ENCODE measurements at regions of chrX and their contacts with region 1.

Region 1: DNA sequence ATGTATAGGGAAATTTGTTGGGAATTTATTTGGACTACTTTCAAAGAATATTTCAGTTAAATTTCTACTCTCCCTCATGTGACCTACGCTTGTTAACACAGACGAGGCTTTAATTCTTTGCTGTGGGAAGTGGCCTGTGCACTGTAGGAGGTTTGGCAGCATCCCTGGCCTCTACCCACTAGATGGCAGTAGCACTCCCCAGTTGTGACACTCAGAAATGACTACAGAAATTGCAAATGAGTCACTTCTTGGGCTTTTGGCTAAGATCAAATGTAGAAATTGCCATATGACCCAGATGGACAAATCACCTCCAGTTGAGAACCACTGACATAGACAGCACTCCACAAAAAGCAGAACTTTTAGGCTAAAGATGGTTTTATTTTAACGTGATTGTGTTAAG is 22.1 kb downstream of the PIR start:
- DNase-seq: peak; percentile 65
- ATAC-seq: peak; percentile 83
- H3K4me3 ChIP-seq: no peak overlapping the region
- H3K27ac ChIP-seq: no peak overlapping the region
- H3K4me1 ChIP-seq: peaks cover 2% of the 10 kb centered on the region
- H3K27me3 ChIP-seq: peaks cover 2% of the 10 kb centered on the region
- CTCF ChIP-seq: peak; percentile 81
- POLR2A ChIP-seq: no peak
- RAD21 ChIP-seq: peak; percentile 73

Region 2: GRCh38 chrX:15299941-15300851 is 170.8 kb before region 1 on chrX:
- CTCF ChIA-PET with region 1: no interaction called
- POLR2A ChIA-PET with region 1: no interaction called
- dilution Hi-C with region 1: no loop called
- in situ Hi-C with region 1: no loop called
- intact Hi-C with region 1: loop called (anchors 2 kb)
- DNase-seq: peak; percentile 30
- ATAC-seq: peak; percentile 29; the same call in 1 of the 2 replicates
- H3K4me3 ChIP-seq: no peak overlapping the region
- H3K27ac ChIP-seq: no peak overlapping the region
- H3K4me1 ChIP-seq: no peaks in the 10 kb centered on the region
- H3K27me3 ChIP-seq: peaks cover 1% of the 10 kb centered on the region
- CTCF ChIP-seq: peak; percentile 54
- POLR2A ChIP-seq: no peak
- RAD21 ChIP-seq: peak; percentile 44

Region 3: GRCh38 chrX:15349046-15349445 is 122.0 kb before region 1 on chrX:
- CTCF ChIA-PET with region 1: interaction called, 17 read pairs
- POLR2A ChIA-PET with region 1: no interaction called
- dilution Hi-C with region 1: no loop called
- in situ Hi-C with region 1: loop called (anchors 5 kb)
- intact Hi-C with region 1: loop called (anchors 1 kb)
- DNase-seq: peak; percentile 73
- ATAC-seq: peak; percentile 90
- H3K4me3 ChIP-seq: no peak overlapping the region
- H3K27ac ChIP-seq: no peak overlapping the region
- H3K4me1 ChIP-seq: no peaks in the 10 kb centered on the region
- H3K27me3 ChIP-seq: peaks cover 4% of the 10 kb centered on the region; the same call in 1 of the 2 replicates
- CTCF ChIP-seq: peak; percentile 66
- POLR2A ChIP-seq: no peak
- RAD21 ChIP-seq: peak; percentile 77

Region 4: DNA sequence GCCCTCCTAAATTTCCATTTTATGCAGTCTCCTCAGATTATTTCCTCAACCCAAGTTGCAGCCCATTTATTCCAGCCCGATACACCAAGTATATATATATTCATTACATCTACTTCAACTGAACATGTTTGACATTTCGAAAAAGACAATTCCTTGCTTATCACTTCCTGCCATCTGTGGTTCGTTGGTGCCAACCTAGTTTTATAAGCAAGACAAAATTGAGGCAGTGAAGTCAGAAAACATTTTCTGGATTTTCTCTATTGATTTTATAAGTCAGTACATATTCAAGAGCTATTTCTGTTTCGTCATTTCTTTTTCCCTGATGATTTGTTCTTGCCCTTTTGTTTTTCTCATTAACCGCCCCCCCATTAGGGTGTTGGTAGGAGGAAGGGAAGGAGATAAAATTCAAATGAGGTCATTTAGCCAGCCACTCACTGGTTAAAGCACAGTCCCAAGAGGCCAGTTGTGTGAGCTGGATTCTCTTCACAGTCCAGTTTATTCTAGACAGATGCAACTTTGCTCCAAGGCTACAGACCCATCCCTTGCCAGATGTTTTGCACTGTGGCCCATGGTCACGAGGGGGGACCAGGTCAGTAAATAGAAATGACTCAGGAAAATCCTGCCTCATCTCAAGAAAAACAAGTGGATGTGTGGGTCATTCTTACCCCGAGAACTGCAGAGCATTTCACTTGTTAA is 66.5 kb before region 1 on chrX:
- CTCF ChIA-PET with region 1: no interaction called
- POLR2A ChIA-PET with region 1: no interaction called
- dilution Hi-C with region 1: no loop called
- in situ Hi-C with region 1: no loop called
- intact Hi-C with region 1: loop called (anchors 5 kb)
- DNase-seq: peak; percentile 36
- ATAC-seq: peak; percentile 62; the same call in 1 of the 2 replicates
- H3K4me3 ChIP-seq: no peak overlapping the region
- H3K27ac ChIP-seq: no peak overlapping the region
- H3K4me1 ChIP-seq: peaks cover 2% of the 10 kb centered on the region; the same call in 1 of the 2 replicates
- H3K27me3 ChIP-seq: no peaks in the 10 kb centered on the region; the same call in 1 of the 2 replicates
- CTCF ChIP-seq: no peak
- POLR2A ChIP-seq: no peak
- RAD21 ChIP-seq: no peak

Measured in IMR-90 (cell line).